MCF 10A (cell line): ENCODE measurements at regions of chr11 and their contacts with region 1.

Region 1: DNA sequence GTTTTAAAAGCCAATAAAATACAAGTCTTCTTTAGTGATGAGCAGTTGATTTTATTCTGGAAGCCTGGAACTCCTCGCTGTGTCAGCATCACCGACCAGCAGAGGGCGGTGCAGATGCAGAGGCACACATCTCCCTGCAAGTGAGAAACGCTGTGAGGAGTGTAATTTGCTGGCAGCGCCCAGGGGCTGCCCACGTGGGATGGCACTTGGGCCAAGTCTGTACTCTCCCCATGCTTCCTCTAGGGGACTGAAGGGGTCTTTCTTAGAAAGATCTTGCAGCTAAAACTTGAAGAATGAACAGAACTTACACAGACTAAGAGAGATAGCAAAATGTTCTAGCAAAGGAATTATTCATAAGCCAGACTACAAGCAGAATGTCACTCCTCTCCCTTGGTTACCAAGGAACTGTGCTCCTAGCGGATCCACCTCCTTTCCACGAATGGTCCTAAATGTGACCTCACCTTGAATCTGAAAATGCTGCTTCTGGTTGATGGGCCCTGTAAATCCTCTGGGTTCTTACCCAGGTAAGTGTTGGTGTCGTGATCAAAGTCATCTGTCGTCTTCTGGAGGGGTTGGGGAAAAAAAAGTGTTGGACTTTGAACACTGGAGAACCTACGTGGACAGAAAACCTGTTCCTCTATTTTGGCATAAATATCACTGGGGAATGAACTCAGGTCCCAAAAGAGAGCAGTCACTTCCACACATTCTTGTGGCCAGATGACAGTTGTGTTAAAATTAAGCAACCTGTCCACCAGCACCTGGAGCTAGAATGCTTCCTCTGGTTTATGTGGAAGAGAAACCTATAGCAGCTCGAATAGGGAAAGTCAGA is 31.8 kb downstream of the CNTF start:
- DNase-seq: peak; percentile 80
- H3K4me3 Mint-ChIP-seq: no peak overlapping the region
- H3K27ac Mint-ChIP-seq: no peak overlapping the region
- H3K4me1 Mint-ChIP-seq: peaks cover 7% of the 10 kb centered on the region
- H3K27me3 Mint-ChIP-seq: no peaks in the 10 kb centered on the region
- CTCF ChIP-seq: peak; percentile 88

Region 2: GRCh38 chr11:58513747-58514367 is 140.4 kb before region 1 on chr11:
- CTCF ChIA-PET with region 1: no interaction called
- POLR2A ChIA-PET with region 1: no interaction called
- intact Hi-C with region 1: no loop called
- DNase-seq: peak; percentile 76
- H3K4me3 Mint-ChIP-seq: no peak overlapping the region
- H3K27ac Mint-ChIP-seq: no peak overlapping the region
- H3K4me1 Mint-ChIP-seq: peaks cover 5% of the 10 kb centered on the region
- H3K27me3 Mint-ChIP-seq: peaks cover 10% of the 10 kb centered on the region
- CTCF ChIP-seq: peak; percentile 75

Region 3: GRCh38 chr11:58675334-58676155 is 21.3 kb after region 1 on chr11:
- CTCF ChIA-PET with region 1: interaction called, 118 read pairs
- POLR2A ChIA-PET with region 1: interaction called, 4 read pairs
- intact Hi-C with region 1: loop called (anchors 1 kb)
- DNase-seq: peak; percentile 63
- H3K4me3 Mint-ChIP-seq: no peak overlapping the region
- H3K27ac Mint-ChIP-seq: no peak overlapping the region
- H3K4me1 Mint-ChIP-seq: no peaks in the 10 kb centered on the region
- H3K27me3 Mint-ChIP-seq: no peaks in the 10 kb centered on the region
- CTCF ChIP-seq: peak; percentile 83

Region 4: GRCh38 chr11:58770627-58771457 is 116.5 kb after region 1 on chr11:
- CTCF ChIA-PET with region 1: interaction called, 7 read pairs
- POLR2A ChIA-PET with region 1: no interaction called
- intact Hi-C with region 1: loop called (anchors 5 kb)
- DNase-seq: peak; percentile 95
- H3K4me3 Mint-ChIP-seq: peak overlapping the region; percentile 46
- H3K27ac Mint-ChIP-seq: peak overlapping the region; percentile 53
- H3K4me1 Mint-ChIP-seq: peaks cover 23% of the 10 kb centered on the region
- H3K27me3 Mint-ChIP-seq: no peaks in the 10 kb centered on the region
- CTCF ChIP-seq: no peak

Region 5: DNA sequence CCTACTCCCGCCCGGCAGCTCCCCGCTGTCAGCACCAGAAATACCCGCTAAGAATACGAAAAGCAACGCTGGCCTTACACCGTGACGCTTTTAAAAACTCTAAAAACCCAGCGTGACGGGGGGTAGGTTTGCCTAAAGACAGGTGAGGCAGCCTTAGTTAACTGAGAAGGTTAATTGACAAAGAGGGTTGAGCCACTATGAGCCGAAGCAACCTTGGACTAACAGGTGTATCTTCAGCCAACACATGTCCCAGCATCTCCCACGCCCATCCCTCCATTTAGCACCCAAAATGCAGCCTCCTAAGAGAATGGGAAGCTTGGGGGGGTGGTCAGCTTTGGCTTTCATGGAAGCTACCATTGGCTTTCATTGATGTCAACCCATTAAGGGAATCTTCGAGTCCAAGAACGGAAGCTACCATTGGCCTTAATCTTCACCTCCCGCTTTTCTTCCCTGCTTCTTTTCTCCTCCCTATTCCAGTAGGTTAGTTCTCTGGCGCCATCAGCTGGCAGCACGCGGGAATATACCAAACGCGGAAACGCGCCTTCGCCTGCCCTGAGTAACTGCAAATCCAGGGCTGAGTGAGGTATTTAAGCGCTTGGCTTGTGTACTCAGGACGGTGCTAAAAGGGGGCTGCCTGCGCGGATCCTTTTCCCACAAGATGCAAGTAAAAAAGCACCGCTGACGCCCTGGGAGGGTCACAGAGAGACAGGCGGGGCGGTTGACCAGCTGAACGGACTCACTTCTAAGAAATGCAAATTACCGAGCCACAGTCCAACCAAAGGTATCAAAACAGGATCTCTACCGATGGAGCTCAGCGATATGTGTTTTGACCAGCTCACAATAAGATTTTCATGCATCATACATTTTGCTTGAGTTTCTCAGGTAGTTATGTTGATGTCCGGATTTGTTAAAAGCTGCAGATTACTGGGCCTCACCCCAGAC is 246.5 kb after region 1 on chr11:
- CTCF ChIA-PET with region 1: interaction called, 6 read pairs
- POLR2A ChIA-PET with region 1: no interaction called
- intact Hi-C with region 1: loop called (anchors 1 kb)
- DNase-seq: peak; percentile 77
- H3K4me3 Mint-ChIP-seq: no peak overlapping the region
- H3K27ac Mint-ChIP-seq: no peak overlapping the region
- H3K4me1 Mint-ChIP-seq: peaks cover 19% of the 10 kb centered on the region
- H3K27me3 Mint-ChIP-seq: no peaks in the 10 kb centered on the region
- CTCF ChIP-seq: peak; percentile 60

Region 6: GRCh38 chr11:59053387-59053786 is 399.1 kb after region 1 on chr11:
- CTCF ChIA-PET with region 1: interaction called, 38 read pairs
- POLR2A ChIA-PET with region 1: no interaction called
- intact Hi-C with region 1: loop called (anchors 1 kb)
- DNase-seq: peak; percentile 69
- H3K4me3 Mint-ChIP-seq: no peak overlapping the region
- H3K27ac Mint-ChIP-seq: no peak overlapping the region
- H3K4me1 Mint-ChIP-seq: peaks cover 7% of the 10 kb centered on the region
- H3K27me3 Mint-ChIP-seq: peaks cover 64% of the 10 kb centered on the region
- CTCF ChIP-seq: peak; percentile 71

Region 7: DNA sequence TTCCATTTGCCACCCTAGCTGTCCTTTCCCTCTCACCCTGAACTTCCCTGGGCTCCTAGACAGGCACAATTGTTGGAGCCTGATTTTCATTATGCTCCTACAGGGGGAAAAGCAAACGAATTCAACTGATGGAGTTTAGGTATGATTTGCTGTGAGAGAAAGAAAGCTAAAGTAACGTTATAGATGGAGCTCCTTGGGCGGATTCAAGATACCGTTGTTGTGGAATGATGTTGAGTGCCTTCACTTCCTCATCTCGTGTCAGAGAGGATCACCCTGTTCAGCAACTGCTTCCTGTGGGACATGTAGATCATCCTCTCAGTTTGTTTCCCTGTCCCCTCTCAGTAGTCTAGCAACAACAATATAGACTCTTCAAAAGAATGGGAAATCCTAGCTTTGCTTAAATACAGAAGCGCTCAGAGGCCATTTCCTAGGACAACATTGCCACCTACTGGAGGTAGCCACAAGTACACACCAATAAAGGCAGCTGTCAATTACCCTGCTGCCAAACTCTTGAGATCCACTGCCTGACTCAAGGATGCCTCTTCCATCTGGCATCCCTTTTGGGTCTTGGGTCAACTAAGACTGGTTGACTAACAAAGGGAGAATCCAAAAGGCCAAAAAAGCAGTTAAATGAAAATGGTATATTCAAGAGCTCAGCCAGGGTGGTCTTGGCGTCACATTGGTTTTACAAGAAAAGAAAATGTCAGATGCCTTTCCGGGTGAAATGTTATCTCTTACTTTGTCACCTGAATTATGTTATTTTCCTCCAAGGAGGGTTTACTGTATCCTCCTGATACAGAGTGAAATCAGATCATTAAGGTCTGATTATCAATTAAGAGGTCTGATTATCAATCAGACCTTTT is 504.1 kb after region 1 on chr11:
- CTCF ChIA-PET with region 1: interaction called, 9 read pairs
- POLR2A ChIA-PET with region 1: no interaction called
- intact Hi-C with region 1: loop called (anchors 5 kb)
- DNase-seq: peak; percentile 78
- H3K4me3 Mint-ChIP-seq: no peak overlapping the region
- H3K27ac Mint-ChIP-seq: no peak overlapping the region
- H3K4me1 Mint-ChIP-seq: no peaks in the 10 kb centered on the region
- H3K27me3 Mint-ChIP-seq: peaks cover 17% of the 10 kb centered on the region
- CTCF ChIP-seq: peak; percentile 76